Transverse colon (tissue), 4 donors: ENCODE measurements at regions of chr15 and their contacts with region 1.

Region 1: GRCh38 chr15:101242160-101242998 is 9.5 kb downstream of the CHSY1 start:
- DNase-seq: peak; percentile 45
- H3K4me3 ChIP-seq: no peak overlapping the region
- H3K27ac ChIP-seq: peak overlapping the region; percentile 41 to 68 (median 46)
- H3K4me1 ChIP-seq: peaks cover 0 to 76% (median 17%) of the 10 kb centered on the region in 4 donors
- H3K27me3 ChIP-seq: no peaks in the 10 kb centered on the region
- CTCF ChIP-seq: no peak
- EP300 ChIP-seq: no peak
- POLR2A ChIP-seq: no peak

Region 2: DNA sequence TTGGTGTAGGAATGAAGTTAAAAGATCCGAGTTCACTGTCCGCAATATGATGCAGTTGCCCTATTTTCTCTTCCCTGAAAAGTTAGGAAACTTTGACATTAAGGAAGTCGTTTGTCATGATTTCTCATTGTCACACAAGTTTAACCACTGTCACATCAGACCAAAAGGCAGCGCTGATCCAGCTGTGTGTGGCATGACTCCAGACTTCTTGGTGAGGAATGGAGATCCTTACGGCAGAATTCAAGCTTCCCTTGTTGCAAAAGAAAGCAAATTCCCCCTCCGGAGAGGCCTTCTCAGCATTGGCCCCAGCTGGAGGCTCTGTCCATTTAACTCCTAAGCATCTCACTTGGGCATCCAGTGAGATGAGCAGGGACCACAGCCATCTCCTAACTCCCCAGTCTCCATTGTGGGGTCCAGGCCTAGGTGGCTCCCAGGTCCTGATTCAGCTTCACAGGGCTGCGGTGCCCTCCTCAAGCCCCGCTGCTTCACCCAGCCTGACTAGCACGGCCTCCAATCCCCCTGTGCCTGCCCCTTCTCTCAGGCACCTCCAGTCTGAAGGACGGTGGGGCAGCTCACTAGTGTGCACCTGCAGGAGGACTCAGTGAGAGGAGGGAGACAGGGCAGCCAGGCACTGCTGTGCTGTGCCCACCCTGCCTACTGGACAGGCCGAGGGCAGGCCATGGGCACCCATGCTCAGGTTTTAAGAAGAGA is 150.1 kb before region 1 on chr15:
- in situ Hi-C with region 1: no loop called
- intact Hi-C with region 1: no loop called
- DNase-seq: no peak
- H3K4me3 ChIP-seq: no peak overlapping the region
- H3K27ac ChIP-seq: peak overlapping the region; percentile 49 to 66 (median 64)
- H3K4me1 ChIP-seq: peaks cover 0 to 12% (median 2%) of the 10 kb centered on the region in 4 donors
- H3K27me3 ChIP-seq: no peaks in the 10 kb centered on the region
- CTCF ChIP-seq: no peak
- EP300 ChIP-seq: no peak
- POLR2A ChIP-seq: no peak

Region 3: GRCh38 chr15:101127506-101128076 is 114.8 kb before region 1 on chr15:
- in situ Hi-C with region 1: no loop called
- intact Hi-C with region 1: loop called (anchors 10 kb)
- DNase-seq: peak; percentile 75
- H3K4me3 ChIP-seq: no peak overlapping the region
- H3K27ac ChIP-seq: peak overlapping the region; percentile 80 to 88 (median 82)
- H3K4me1 ChIP-seq: peaks cover 13 to 25% (median 15%) of the 10 kb centered on the region in 4 donors
- H3K27me3 ChIP-seq: no peaks in the 10 kb centered on the region
- CTCF ChIP-seq: no peak
- EP300 ChIP-seq: no peak
- POLR2A ChIP-seq: no peak

Region 4: DNA sequence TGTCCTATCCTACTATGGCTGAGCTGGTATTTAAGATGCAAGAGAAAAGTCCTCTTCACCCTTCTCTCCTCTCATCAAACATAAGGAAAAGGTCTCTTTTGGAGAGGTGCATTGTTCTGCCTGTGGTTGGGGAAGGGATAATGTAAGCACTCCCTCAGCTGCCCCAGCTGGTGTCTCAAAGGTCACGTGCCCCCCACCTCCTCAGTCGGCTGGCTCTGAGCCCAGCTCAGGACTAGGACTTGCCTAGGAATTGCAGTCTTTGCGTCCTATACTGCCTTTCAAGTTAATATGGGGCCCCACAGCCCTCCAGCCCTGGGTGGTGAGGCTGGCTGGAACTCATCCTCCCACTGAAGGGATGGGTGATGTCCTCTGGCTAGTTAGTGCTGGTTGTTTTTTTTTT is 599.3 kb after region 1 on chr15:
- in situ Hi-C with region 1: no loop called
- intact Hi-C with region 1: no loop called
- DNase-seq: no peak
- H3K4me3 ChIP-seq: no peak overlapping the region
- H3K27ac ChIP-seq: no peak overlapping the region
- H3K4me1 ChIP-seq: no peaks in the 10 kb centered on the region
- H3K27me3 ChIP-seq: peaks cover 41% of the 10 kb centered on the region
- CTCF ChIP-seq: no peak
- EP300 ChIP-seq: no peak
- POLR2A ChIP-seq: no peak